ENCODE measurements at regions of chr21 and their contacts with region 1.

Region 1: GRCh38 chr21:32257962-32258785 is 20.7 kb downstream of the MIS18A start:
- DNase-seq: peak in 1 of 2 donors; percentile 85
- H3K4me3 ChIP-seq: no peak overlapping the region
- H3K27ac ChIP-seq: peak overlapping the region in 1 of 2 donors; percentile 57
- H3K4me1 ChIP-seq: peaks cover 5 to 29% of the 10 kb centered on the region in 2 donors
- H3K27me3 ChIP-seq: no peaks in the 10 kb centered on the region
- CTCF ChIP-seq: peak; percentile 62 to 76 (median 71)

Region 2: DNA sequence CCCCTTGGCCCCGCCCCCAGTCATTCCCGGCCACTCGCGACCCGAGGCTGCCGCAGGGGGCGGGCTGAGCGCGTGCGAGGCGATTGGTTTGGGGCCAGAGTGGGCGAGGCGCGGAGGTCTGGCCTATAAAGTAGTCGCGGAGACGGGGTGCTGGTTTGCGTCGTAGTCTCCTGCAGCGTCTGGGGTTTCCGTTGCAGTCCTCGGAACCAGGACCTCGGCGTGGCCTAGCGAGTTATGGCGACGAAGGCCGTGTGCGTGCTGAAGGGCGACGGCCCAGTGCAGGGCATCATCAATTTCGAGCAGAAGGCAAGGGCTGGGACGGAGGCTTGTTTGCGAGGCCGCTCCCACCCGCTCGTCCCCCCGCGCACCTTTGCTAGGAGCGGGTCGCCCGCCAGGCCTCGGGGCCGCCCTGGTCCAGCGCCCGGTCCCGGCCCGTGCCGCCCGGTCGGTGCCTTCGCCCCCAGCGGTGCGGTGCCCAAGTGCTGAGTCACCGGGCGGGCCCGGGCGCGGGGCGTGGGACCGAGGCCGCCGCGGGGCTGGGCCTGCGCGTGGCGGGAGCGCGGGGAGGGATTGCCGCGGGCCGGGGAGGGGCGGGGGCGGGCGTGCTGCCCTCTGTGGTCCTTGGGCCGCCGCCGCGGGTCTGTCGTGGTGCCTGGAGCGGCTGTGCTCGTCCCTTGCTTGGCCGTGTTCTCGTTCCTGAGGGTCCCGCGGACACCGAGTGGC is 598.5 kb before region 1 on chr21 and contains the start of gene SOD1:
- intact Hi-C with region 1: loop called (anchors 5 kb)
- DNase-seq: peak; percentile 82 to 97
- H3K4me3 ChIP-seq: peak within 1 kb of the TSS; percentile 73 to 76
- H3K27ac ChIP-seq: peak within 1 kb of the TSS; percentile 89 to 90
- H3K4me1 ChIP-seq: peaks cover 0 to 28% of the 10 kb centered on the region in 2 donors
- H3K27me3 ChIP-seq: no peaks in the 10 kb centered on the region
- CTCF ChIP-seq: no peak
- total RNA-seq, gene SOD1: 87.7 TPM

Region 3: GRCh38 chr21:31786164-31786920 is 471.8 kb before region 1 on chr21:
- intact Hi-C with region 1: loop called (anchors 5 kb)
- DNase-seq: no peak
- H3K4me3 ChIP-seq: no peak overlapping the region
- H3K27ac ChIP-seq: no peak overlapping the region
- H3K4me1 ChIP-seq: no peaks in the 10 kb centered on the region
- H3K27me3 ChIP-seq: no peaks in the 10 kb centered on the region
- CTCF ChIP-seq: no peak

Region 4: GRCh38 chr21:31866077-31866511 is 392.1 kb before region 1 on chr21:
- intact Hi-C with region 1: loop called (anchors 1 kb)
- DNase-seq: peak in 1 of 2 donors; percentile 88
- H3K4me3 ChIP-seq: no peak overlapping the region
- H3K27ac ChIP-seq: no peak overlapping the region
- H3K4me1 ChIP-seq: no peaks in the 10 kb centered on the region
- H3K27me3 ChIP-seq: no peaks in the 10 kb centered on the region
- CTCF ChIP-seq: peak; percentile 55 to 91 (median 87)

Region 5: DNA sequence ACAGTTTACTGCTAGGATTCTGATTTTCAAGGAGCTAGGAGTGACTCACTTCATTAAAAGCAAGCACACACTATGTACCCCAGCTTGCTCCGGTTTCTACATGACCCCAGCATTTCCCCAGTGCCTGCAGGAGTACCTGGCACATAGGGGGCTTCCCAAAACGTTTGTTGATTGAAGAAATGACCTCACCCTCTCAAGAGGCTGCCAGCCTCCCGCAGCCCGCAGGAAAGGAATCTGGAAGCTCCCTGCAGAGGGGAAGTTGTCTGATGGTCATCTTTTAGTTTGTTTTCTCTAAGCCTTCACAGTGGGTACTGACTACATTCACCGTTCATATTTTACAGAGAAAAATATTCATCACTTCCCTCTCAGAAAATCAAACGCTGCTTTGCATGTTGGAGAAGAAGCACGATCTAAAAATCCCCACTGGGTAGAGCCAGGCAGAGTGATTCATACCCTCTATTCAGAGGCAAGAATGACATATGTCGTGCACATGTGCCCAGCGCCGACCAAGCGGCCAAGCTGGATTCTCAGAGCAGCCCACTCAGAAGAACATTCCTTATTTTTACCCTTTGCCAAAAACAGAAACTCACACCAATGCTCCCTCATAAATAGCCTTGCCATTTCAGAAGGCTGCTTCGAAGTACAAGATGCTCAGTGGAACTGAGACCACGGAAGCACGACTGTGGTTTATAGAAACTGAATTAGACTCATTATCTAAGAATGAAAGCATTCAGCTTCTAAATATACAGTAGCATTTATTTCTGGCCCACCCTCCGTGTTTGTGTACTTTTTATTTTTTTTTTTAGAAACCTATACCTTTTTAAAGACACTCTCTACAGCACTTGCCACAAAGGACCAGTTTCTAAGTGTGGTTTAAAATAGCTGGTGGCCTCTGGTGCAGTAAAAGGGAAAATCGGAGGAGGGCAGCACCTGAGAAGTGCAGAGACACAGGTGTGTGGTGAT is 122.5 kb before region 1 on chr21:
- intact Hi-C with region 1: loop called (anchors 5 kb)
- DNase-seq: peak in 1 of 2 donors; percentile 74
- H3K4me3 ChIP-seq: peak overlapping the region in 1 of 2 donors; percentile 29
- H3K27ac ChIP-seq: peak overlapping the region; percentile 36 to 46
- H3K4me1 ChIP-seq: peaks cover 0 to 8% of the 10 kb centered on the region in 2 donors
- H3K27me3 ChIP-seq: no peaks in the 10 kb centered on the region
- CTCF ChIP-seq: no peak